Activated B cell treated with CpG ODN at 0.5 μM for 24 hours (primary cell): ENCODE measurements at regions of chr17 and their contacts with region 1.

Region 1: DNA sequence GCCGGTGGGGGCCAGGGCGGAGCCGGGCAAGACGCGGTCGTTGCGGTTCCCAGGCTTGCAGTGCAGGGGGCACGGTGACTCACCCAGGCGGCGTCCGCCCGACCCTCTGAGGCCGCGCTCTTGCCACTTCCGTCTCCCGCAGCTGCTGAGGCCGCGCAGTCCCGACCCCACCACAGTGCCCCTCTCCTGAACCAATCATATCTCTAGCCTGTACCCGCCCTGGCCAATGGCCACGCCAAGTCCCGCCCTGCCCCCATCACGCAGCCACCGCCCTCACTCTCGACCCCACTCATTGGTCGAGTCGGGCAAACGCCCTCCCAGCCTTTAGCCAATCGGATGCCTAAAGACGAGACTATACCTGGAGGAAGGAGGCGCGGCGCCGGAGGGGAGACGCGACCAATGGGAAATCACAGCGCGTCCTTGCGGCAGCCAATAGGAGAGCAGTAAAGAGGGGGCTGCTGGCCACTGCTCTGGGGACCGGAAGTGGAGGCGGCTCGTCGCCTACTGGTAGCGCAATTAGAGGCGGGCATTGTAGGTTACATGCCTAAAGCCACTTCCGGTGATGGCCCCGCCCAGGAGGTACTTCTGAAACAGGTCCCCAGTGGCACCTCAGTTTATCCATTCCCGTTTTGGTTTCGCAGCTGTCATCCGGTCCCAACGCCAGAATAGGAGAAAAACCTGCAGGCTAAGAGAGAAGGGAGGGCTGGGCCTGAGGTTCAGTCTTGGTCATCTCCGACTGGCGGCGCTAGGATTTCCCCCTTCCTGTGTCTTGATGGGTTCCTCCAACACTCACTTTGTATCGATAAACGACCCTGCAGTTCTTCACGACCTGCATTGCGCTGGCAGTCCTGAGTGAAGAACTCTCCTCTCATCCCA is 3.5 kb upstream of the MTMR4 start:
- DNase-seq: peak; percentile 95
- ATAC-seq: peak; percentile 79
- H3K4me3 Mint-ChIP-seq: peak overlapping the region; percentile 96
- H3K27ac Mint-ChIP-seq: peak overlapping the region; percentile 97
- H3K4me1 Mint-ChIP-seq: peaks cover 46% of the 10 kb centered on the region
- H3K27me3 Mint-ChIP-seq: no peaks in the 10 kb centered on the region
- CTCF ChIP-seq: no peak

Region 2: GRCh38 chr17:58329035-58329809 is 188.8 kb before region 1 on chr17:
- CTCF ChIA-PET with region 1: no interaction called
- POLR2A ChIA-PET with region 1: interaction called, 20 read pairs
- intact Hi-C with region 1: no loop called
- DNase-seq: peak; percentile 75
- ATAC-seq: peak; percentile 36
- H3K4me3 Mint-ChIP-seq: peak overlapping the region; percentile 100
- H3K27ac Mint-ChIP-seq: peak overlapping the region; percentile 93
- H3K4me1 Mint-ChIP-seq: peaks cover 65% of the 10 kb centered on the region
- H3K27me3 Mint-ChIP-seq: peaks cover 2% of the 10 kb centered on the region
- CTCF ChIP-seq: no peak

Region 3: GRCh38 chr17:58463821-58464220 is 54.2 kb before region 1 on chr17:
- CTCF ChIA-PET with region 1: no interaction called
- POLR2A ChIA-PET with region 1: no interaction called
- intact Hi-C with region 1: no loop called
- DNase-seq: no peak
- ATAC-seq: no peak
- H3K4me3 Mint-ChIP-seq: no peak overlapping the region
- H3K27ac Mint-ChIP-seq: no peak overlapping the region
- H3K4me1 Mint-ChIP-seq: no peaks in the 10 kb centered on the region
- H3K27me3 Mint-ChIP-seq: no peaks in the 10 kb centered on the region
- CTCF ChIP-seq: no peak

Region 4: DNA sequence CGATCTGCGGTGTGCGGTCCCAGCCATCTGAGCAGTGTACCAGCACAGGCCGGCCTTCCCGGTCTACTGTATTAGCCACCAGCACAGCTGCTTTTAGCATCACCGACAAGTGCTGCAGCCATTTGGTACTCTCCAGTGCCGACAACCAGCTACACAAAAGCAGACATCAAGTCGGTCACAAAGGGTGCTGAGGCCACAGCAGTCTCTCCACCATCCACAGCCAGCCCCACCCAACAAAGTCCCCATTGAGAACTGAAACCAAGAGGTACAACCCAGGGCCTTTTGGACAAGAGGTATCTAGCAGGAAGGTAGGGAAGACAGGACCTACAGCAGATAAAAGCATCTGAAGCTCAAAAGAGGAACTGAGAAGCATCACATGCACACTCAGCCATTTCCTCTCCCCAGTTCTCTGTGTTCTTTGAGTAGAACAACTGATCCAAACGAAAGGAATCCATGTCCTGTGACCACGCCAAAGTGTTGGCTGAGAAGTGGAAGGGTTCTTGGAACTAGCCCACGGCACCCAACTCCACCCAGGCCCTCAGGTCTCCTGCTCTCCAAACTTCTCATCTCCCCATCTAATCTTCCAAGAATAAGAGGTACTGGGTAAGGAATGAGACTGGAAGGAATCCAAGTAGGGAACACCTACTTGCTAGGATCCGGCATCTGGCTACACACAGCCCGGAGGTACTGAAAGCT is 13.0 kb before region 1 on chr17:
- CTCF ChIA-PET with region 1: interaction called, 7 read pairs
- POLR2A ChIA-PET with region 1: interaction called, 30 read pairs
- intact Hi-C with region 1: loop called (anchors 1 kb)
- DNase-seq: peak; percentile 44
- ATAC-seq: peak; percentile 94
- H3K4me3 Mint-ChIP-seq: peak overlapping the region; percentile 64
- H3K27ac Mint-ChIP-seq: peak overlapping the region; percentile 97
- H3K4me1 Mint-ChIP-seq: peaks cover 28% of the 10 kb centered on the region
- H3K27me3 Mint-ChIP-seq: no peaks in the 10 kb centered on the region
- CTCF ChIP-seq: no peak

Region 5: DNA sequence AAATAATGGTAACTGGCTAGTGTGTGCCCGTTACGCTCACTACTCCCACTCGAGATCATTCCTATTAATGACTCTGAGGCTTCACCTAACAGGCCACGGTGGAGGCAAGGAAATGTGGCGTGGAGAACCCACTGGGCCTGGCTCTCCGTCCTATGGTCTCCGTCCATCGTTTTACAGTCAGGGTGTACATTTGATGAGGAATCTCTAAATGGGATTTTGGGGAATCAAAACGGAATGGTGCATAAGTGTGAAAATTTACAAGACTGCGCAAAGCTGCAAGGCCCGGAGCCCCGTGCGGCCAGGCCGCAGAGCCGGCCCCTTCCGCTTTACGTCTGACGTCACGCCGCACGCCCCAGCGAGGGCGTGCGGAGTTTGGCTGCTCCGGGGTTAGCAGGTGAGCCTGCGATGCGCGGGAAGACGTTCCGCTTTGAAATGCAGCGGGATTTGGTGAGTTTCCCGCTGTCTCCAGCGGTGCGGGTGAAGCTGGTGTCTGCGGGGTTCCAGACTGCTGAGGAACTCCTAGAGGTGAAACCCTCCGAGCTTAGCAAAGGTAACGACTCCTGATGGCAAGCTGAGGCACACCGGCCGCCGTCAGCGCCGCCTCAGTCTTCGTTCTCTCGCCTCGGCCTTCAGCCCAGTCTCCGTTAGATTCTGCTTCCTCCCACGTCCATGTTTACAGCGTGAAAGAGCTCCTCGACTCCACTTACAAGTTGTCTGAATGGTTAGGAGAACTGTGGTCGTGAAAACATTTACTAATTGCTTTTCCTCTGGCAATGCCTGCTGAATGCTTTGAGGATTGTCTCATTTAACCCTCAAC is 174.5 kb after region 1 on chr17 and contains the start of gene RAD51C:
- CTCF ChIA-PET with region 1: interaction called, 9 read pairs
- POLR2A ChIA-PET with region 1: interaction called, 12 read pairs
- intact Hi-C with region 1: loop called (anchors 1 kb)
- DNase-seq: peak; percentile 83
- ATAC-seq: peak; percentile 98
- H3K4me3 Mint-ChIP-seq: peak within 1 kb of the TSS; percentile 94
- H3K27ac Mint-ChIP-seq: peak within 1 kb of the TSS; percentile 89
- H3K4me1 Mint-ChIP-seq: peaks cover 22% of the 10 kb centered on the region
- H3K27me3 Mint-ChIP-seq: no peaks in the 10 kb centered on the region
- CTCF ChIP-seq: no peak
- total RNA-seq, gene RAD51C: 32.8 and 36.8 TPM in 2 replicates

Region 6: DNA sequence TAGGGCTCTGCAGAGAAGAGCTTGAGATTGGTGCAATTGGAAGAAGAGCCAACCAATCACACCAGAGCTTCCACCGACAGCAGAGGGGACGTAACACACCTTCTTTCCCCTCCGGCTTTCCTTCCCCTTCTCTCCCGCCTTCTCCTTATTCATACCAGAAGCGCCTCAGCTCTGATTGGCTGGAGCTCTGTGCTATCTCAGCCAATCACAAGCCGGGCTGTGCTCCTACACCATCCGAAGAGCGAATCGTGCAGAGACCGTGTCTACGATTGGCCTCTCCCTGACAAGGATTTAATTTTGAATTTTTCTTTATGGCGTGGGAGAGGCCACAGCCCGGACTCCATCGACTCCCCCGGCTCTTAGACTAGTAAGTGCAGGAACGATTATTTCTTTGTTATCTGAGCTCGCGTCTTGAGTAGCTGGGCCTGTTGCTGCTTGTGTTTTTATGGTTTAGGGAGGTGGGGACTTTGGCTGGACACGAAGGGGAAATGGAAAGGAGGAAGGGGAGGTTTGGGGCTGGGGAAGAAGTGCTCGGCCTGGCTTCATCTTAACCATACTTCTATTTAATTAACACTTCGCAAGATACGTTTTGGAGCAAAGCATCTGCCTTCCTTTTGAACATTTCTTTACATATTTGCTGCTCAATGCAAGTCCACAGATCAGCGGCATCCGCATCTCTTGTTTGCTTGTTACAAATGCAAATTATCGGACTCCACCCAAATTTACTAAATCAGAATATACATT is 637.6 kb after region 1 on chr17 and contains the start of gene PRR11:
- CTCF ChIA-PET with region 1: no interaction called
- POLR2A ChIA-PET with region 1: no interaction called
- intact Hi-C with region 1: loop called (anchors 1 kb)
- DNase-seq: peak; percentile 65
- ATAC-seq: peak; percentile 88
- H3K4me3 Mint-ChIP-seq: no peak within 1 kb of the TSS
- H3K27ac Mint-ChIP-seq: no peak within 1 kb of the TSS
- H3K4me1 Mint-ChIP-seq: peaks cover 16% of the 10 kb centered on the region
- H3K27me3 Mint-ChIP-seq: no peaks in the 10 kb centered on the region
- CTCF ChIP-seq: no peak
- total RNA-seq, gene PRR11: 2.4 and 4.8 TPM in 2 replicates